K562 (cell line): ENCODE measurements at regions of chr14 and their contacts with region 1.

Region 1: DNA sequence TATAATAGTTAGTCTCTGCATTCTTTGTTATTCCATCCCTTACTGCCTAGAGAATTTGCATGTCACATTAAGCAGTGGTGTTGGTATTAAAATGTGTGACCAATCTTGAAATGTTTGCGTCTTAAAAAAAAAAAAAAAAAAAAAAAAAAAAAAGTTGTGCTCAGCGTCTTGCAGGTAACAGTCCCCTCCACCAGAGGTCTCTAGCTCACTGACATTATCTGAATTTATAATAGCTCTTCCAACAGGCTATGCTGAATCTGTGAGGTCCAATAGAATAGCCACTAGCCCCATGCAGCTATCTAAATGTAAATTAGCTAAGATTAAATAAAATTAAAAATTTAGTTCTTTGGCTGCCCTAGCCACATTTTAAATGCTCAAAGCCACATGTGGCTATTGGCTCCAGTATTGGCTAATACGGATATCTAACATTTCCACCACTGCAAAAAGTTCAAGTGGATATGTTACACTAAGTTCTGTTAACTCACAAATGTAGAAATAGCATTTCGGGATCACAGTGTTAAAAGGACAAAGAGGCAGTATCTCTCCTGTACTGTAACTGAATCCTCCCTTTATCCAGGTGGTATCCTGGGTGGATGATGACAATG is 28.7 kb downstream of the NKX2-8 start:
- DNase-seq: peak; percentile 32 to 38 (median 37)
- ATAC-seq: peak; percentile 80
- H3K4me3 ChIP-seq: no peak overlapping the region
- H3K27ac ChIP-seq: no peak overlapping the region
- H3K4me1 ChIP-seq: no peaks in the 10 kb centered on the region
- H3K27me3 ChIP-seq: peaks cover 0 to 5% of the 10 kb centered on the region in 2 experiments; a peak in 2 of 5 replicates
- CTCF ChIP-seq: peak; percentile 54 to 70 (median 55)
- EP300 ChIP-seq: no peak
- POLR2A ChIP-seq: no peak
- RAD21 ChIP-seq: peak in 1 of 2 experiments; percentile 42; a peak in 3 of 4 replicates

Region 2: DNA sequence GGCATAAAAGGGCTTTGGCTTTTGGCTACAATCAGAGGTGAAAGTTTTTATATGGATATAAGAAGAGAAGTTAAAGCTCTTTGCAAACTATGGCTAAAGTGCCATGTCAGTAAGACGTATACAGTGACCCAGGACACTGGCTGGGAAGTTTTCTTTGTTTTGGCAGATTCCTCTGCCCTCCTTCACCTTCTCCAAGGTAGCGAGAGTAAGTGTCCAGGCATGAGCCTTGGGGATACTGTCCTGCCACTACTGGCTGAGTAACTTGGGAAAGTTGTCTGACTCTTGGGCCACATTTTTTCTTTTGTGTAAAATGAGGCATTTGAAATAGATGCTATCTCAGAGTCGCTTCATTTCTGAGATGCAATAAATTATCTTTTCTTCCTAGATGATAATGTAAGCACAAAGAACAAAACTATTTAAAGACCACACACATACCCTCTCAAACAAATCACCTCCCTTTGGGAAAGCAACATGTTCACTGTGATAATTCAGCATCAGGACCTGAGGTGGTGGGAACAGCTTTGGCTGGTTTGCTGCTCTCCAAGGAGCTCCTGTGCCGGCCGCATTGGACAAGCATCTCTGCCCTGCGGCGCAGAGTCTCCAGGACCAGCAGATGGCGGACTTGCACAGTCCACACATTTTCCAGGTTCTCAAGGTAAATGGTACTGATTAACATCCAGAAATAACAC is 483.6 kb before region 1 on chr14:
- CTCF ChIA-PET with region 1: no interaction called
- POLR2A ChIA-PET with region 1: no interaction called
- in situ Hi-C with region 1: no loop called
- intact Hi-C with region 1: loop called (anchors 2 kb)
- DNase-seq: peak; percentile 25 to 61 (median 32)
- ATAC-seq: peak; percentile 94
- H3K4me3 ChIP-seq: no peak overlapping the region
- H3K27ac ChIP-seq: no peak overlapping the region
- H3K4me1 ChIP-seq: no peaks in the 10 kb centered on the region
- H3K27me3 ChIP-seq: no peaks in the 10 kb centered on the region
- CTCF ChIP-seq: peak; percentile 68 to 77 (median 74)
- EP300 ChIP-seq: no peak
- POLR2A ChIP-seq: no peak
- RAD21 ChIP-seq: peak; percentile 56 to 75

Region 3: GRCh38 chr14:36604757-36605505 is 51.2 kb after region 1 on chr14:
- CTCF ChIA-PET with region 1: interaction called, 7 read pairs
- POLR2A ChIA-PET with region 1: no interaction called
- in situ Hi-C with region 1: no loop called
- intact Hi-C with region 1: loop called (anchors 1 kb)
- DNase-seq: peak; percentile 41 to 73 (median 56)
- ATAC-seq: peak; percentile 83
- H3K4me3 ChIP-seq: no peak overlapping the region
- H3K27ac ChIP-seq: no peak overlapping the region
- H3K4me1 ChIP-seq: no peaks in the 10 kb centered on the region
- H3K27me3 ChIP-seq: no peaks in the 10 kb centered on the region; a peak in 2 of 5 replicates
- CTCF ChIP-seq: peak; percentile 63 to 81 (median 67); a peak in 5 of 6 replicates
- EP300 ChIP-seq: no peak
- POLR2A ChIP-seq: no peak
- RAD21 ChIP-seq: peak; percentile 55 to 68

Region 4: DNA sequence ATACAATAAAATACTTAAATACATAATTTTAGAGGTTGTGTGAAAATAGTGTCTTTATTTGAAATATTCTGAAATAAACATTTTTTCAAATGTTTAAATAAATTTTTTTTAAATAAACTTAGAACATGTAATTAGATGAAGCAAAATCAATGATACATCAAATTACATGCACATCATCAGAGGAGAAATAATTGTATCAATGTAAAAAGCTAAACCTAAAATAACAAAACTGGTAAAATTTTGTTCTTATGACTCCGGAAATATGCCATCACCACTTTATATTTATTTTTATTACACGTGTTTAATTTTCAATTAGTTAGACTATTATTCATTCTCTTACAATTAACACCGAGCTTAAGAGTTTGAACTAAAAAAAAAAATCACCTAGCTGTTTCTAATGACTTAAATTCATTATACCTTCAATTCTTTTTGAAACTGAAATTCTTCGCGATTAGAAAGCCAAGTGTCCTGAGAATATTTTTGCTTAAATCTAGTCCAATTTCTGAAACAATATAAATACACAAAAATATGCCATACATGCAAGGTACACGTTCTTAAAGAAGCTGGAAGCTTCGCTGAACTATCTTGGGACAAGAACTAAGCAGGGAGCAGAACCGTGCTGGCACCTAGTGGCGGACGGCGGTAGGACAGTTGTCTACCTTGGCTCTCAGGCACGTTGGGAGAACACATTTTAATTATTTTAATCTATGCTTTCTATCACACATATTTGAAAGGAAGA is 388.2 kb after region 1 on chr14:
- CTCF ChIA-PET with region 1: no interaction called
- POLR2A ChIA-PET with region 1: no interaction called
- in situ Hi-C with region 1: no loop called
- intact Hi-C with region 1: loop called (anchors 10 kb)
- DNase-seq: peak; percentile 46 to 76 (median 53)
- ATAC-seq: peak; percentile 95
- H3K4me3 ChIP-seq: no peak overlapping the region
- H3K27ac ChIP-seq: no peak overlapping the region
- H3K4me1 ChIP-seq: no peaks in the 10 kb centered on the region
- H3K27me3 ChIP-seq: no peaks in the 10 kb centered on the region
- CTCF ChIP-seq: peak; percentile 79 to 86 (median 80)
- EP300 ChIP-seq: no peak
- POLR2A ChIP-seq: no peak
- RAD21 ChIP-seq: peak; percentile 67 to 78

Region 5: GRCh38 chr14:37114001-37114400 is 560.2 kb after region 1 on chr14:
- CTCF ChIA-PET with region 1: no interaction called
- POLR2A ChIA-PET with region 1: no interaction called
- in situ Hi-C with region 1: no loop called
- intact Hi-C with region 1: no loop called
- DNase-seq: no peak
- ATAC-seq: no peak
- H3K4me3 ChIP-seq: no peak overlapping the region
- H3K27ac ChIP-seq: no peak overlapping the region
- H3K4me1 ChIP-seq: no peaks in the 10 kb centered on the region
- H3K27me3 ChIP-seq: no peaks in the 10 kb centered on the region
- CTCF ChIP-seq: no peak
- EP300 ChIP-seq: no peak
- POLR2A ChIP-seq: no peak
- RAD21 ChIP-seq: no peak

Region 6: DNA sequence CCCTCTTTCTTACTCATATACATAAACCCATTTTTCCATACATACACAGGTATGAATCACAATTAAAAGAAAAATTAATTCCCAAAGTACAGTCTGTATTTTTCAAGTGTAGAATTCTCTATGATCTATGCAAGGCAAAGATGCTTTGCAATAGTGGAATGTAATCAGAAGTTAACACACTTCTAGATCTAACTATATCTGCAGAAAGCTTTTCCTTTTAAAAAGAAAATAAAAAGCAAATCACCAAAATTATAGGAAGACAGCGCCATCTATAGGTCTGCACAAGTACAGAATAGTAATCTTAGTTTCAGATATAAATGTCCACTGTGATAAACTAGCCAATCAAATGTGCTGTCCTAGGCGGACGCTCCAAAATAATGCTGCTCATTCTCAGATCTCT is 596.7 kb after region 1 on chr14:
- CTCF ChIA-PET with region 1: interaction called, 20 read pairs
- POLR2A ChIA-PET with region 1: no interaction called
- in situ Hi-C with region 1: no loop called
- intact Hi-C with region 1: no loop called
- DNase-seq: peak in 2 of 4 experiments; percentile 46 to 47
- ATAC-seq: peak; percentile 69
- H3K4me3 ChIP-seq: no peak overlapping the region
- H3K27ac ChIP-seq: no peak overlapping the region
- H3K4me1 ChIP-seq: peaks cover 5 to 8% of the 10 kb centered on the region in 2 experiments; a peak in 3 of 5 replicates
- H3K27me3 ChIP-seq: no peaks in the 10 kb centered on the region
- CTCF ChIP-seq: peak; percentile 43 to 71 (median 52); a peak in 4 of 6 replicates
- EP300 ChIP-seq: no peak
- POLR2A ChIP-seq: no peak
- RAD21 ChIP-seq: peak in 1 of 2 experiments; percentile 64; a peak in 3 of 4 replicates